Calu3 (cell line): ENCODE measurements at regions of chr6 and their contacts with region 1.

Region 1: GRCh38 chr6:106339334-106340029 is 13.9 kb upstream of the ATG5 start:
- DNase-seq: peak; percentile 70
- H3K4me3 Mint-ChIP-seq: peak overlapping the region; percentile 44
- H3K27ac Mint-ChIP-seq: peak overlapping the region; percentile 60
- H3K4me1 Mint-ChIP-seq: peaks cover 12% of the 10 kb centered on the region
- H3K27me3 Mint-ChIP-seq: no peaks in the 10 kb centered on the region
- CTCF ChIP-seq: peak; percentile 75

Region 2: DNA sequence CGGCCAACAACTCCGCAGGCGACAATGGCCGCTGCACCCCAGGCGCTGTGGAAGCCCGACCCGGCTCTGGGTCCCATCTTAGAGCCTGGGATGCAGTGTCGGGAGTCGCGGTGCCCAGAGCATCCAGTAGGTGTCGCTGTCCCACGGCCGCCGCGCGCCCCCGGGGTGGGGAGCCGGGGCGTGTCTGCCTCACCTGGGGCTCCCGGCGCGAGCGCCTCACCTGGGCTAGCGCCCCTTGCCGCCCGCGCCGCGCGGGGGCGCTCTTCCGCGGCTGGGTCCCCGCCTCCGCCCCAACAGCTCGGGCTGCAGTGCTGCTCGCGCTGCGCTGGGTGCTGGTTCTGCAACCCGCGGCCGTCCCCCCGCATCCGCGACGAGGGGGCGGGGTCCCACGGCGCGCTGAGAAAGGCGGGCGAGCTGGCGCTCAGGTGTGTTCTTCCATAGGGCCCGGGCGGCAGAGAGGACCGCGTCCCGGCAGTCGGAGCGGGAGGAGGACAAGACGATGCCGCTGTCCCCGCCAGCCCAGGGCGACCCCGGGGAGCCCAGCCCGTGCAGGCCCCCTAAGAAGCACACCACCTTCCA is 21.0 kb after region 1 on chr6 and contains the start of gene CRYBG1:
- CTCF ChIA-PET with region 1: interaction called, 10 read pairs
- intact Hi-C with region 1: loop called (anchors 2 kb)
- DNase-seq: peak; percentile 96
- H3K4me3 Mint-ChIP-seq: peak within 1 kb of the TSS; percentile 92
- H3K27ac Mint-ChIP-seq: no peak within 1 kb of the TSS
- H3K4me1 Mint-ChIP-seq: peaks cover 13% of the 10 kb centered on the region
- H3K27me3 Mint-ChIP-seq: no peaks in the 10 kb centered on the region
- CTCF ChIP-seq: peak; percentile 97
- total RNA-seq, gene CRYBG1: 40.7 and 45.4 TPM in 2 replicates

Region 3: GRCh38 chr6:106513808-106514597 is 174.5 kb after region 1 on chr6:
- CTCF ChIA-PET with region 1: no interaction called
- intact Hi-C with region 1: no loop called
- DNase-seq: peak; percentile 16
- H3K4me3 Mint-ChIP-seq: peak overlapping the region; percentile 89
- H3K27ac Mint-ChIP-seq: peak overlapping the region; percentile 73
- H3K4me1 Mint-ChIP-seq: peaks cover 22% of the 10 kb centered on the region
- H3K27me3 Mint-ChIP-seq: no peaks in the 10 kb centered on the region
- CTCF ChIP-seq: no peak

Region 4: GRCh38 chr6:106568530-106568929 is 229.0 kb after region 1 on chr6:
- CTCF ChIA-PET with region 1: interaction called, 17 read pairs
- intact Hi-C with region 1: loop called (anchors 5 kb)
- DNase-seq: no peak
- H3K4me3 Mint-ChIP-seq: no peak overlapping the region
- H3K27ac Mint-ChIP-seq: no peak overlapping the region
- H3K4me1 Mint-ChIP-seq: no peaks in the 10 kb centered on the region
- H3K27me3 Mint-ChIP-seq: no peaks in the 10 kb centered on the region
- CTCF ChIP-seq: no peak